A673 (cell line): ENCODE measurements at regions of chr2 and their contacts with region 1.

Region 1: GRCh38 chr2:141109633-141110032 is 1021.2 kb downstream of the LRP1B start:
- DNase-seq: peak; percentile 40
- H3K4me3 ChIP-seq: no peak overlapping the region
- H3K27ac ChIP-seq: no peak overlapping the region
- H3K4me1 ChIP-seq: peaks cover 16% of the 10 kb centered on the region
- H3K27me3 ChIP-seq: no peaks in the 10 kb centered on the region
- CTCF ChIP-seq: peak; percentile 51

Region 2: DNA sequence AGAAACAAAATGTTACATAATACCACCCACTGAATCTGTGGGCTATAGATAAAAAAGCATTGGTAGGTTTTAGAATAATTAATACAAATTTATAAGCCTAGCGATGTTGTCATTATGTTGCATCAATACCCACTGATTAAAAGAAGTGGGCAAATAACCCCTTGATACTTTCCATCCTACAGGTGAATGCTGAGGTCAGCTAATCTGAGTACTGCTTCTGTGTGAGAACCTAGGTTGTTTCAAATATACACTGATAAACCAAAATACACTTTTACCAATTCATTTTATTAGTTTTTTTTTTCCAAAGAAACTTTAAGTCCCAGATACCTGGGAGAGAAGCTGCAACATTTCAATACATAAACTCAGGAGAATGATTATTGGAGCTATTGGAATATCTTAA is 72.6 kb after region 1 on chr2:
- CTCF ChIA-PET with region 1: no interaction called
- POLR2A ChIA-PET with region 1: no interaction called
- intact Hi-C with region 1: no loop called
- DNase-seq: no peak
- H3K4me3 ChIP-seq: no peak overlapping the region
- H3K27ac ChIP-seq: no peak overlapping the region
- H3K4me1 ChIP-seq: peaks cover 6% of the 10 kb centered on the region
- H3K27me3 ChIP-seq: no peaks in the 10 kb centered on the region
- CTCF ChIP-seq: no peak

Region 3: DNA sequence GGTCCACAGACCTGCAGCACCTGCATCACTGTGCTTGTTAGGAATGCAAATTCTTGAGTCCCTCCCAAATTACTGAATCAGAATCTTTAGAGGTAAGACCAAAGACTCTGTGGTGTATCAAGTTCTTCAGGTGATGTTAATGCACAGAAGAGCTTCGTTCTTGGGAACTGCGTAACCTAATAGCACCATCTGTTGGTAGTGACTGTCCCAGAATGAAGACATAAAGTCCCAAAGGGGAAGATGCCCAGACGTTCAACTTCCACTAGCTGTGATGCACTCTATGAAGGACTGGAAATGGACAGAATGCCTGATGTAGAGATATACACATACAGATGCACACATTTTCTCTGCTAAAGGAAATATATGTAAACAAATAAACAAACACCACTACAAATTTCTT is 445.2 kb after region 1 on chr2:
- CTCF ChIA-PET with region 1: no interaction called
- POLR2A ChIA-PET with region 1: no interaction called
- intact Hi-C with region 1: loop called (anchors 10 kb)
- DNase-seq: peak; percentile 74
- H3K4me3 ChIP-seq: no peak overlapping the region
- H3K27ac ChIP-seq: no peak overlapping the region
- H3K4me1 ChIP-seq: peaks cover 21% of the 10 kb centered on the region
- H3K27me3 ChIP-seq: no peaks in the 10 kb centered on the region
- CTCF ChIP-seq: peak; percentile 76